Activated CD8-positive, alpha-beta T cell treated with anti-CD3 and anti-CD28 coated beads, Interleukin-2, amount 10 ng/mL, durations not matched to agents 7 days and 5 days (primary cell): ENCODE measurements at regions of chr14 and their contacts with region 1.

Region 1: GRCh38 chr14:74804219-74804826 is 41.2 kb downstream of the YLPM1 start:
- DNase-seq: peak; percentile 51
- ATAC-seq: peak; percentile 68
- H3K4me3 Mint-ChIP-seq: no peak overlapping the region
- H3K27ac Mint-ChIP-seq: no peak overlapping the region
- H3K4me1 Mint-ChIP-seq: no peaks in the 10 kb centered on the region
- H3K27me3 Mint-ChIP-seq: no peaks in the 10 kb centered on the region

Region 2: DNA sequence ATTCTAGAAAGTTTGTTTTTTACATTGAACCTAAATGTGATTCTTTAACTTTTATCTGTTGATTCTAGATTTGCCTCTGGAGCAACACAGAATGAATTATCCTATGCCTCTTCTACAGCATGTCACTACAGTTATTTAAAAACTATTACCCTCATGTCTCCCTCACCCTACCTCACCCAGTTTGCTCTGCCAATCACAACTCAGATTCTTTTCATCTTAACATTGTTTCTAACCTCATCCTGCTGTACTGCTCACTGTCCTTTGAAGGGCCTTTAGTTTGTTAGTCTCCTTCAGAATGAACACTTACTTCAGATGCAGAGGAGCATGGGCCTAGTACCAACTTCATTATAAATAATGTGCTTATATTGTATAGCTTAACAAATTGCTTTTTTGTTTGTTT is 19.7 kb before region 1 on chr14:
- CTCF ChIA-PET with region 1: interaction called, 10 read pairs
- POLR2A ChIA-PET with region 1: no interaction called
- DNase-seq: no peak
- ATAC-seq: peak; percentile 23
- H3K4me3 Mint-ChIP-seq: no peak overlapping the region
- H3K27ac Mint-ChIP-seq: peak overlapping the region; percentile 10
- H3K4me1 Mint-ChIP-seq: peaks cover 16% of the 10 kb centered on the region
- H3K27me3 Mint-ChIP-seq: no peaks in the 10 kb centered on the region

Region 3: GRCh38 chr14:74792249-74793039 is 11.9 kb before region 1 on chr14:
- CTCF ChIA-PET with region 1: interaction called, 10 read pairs
- POLR2A ChIA-PET with region 1: no interaction called
- DNase-seq: peak; percentile 41
- ATAC-seq: peak; percentile 70
- H3K4me3 Mint-ChIP-seq: peak overlapping the region; percentile 71
- H3K27ac Mint-ChIP-seq: peak overlapping the region; percentile 77
- H3K4me1 Mint-ChIP-seq: peaks cover 41% of the 10 kb centered on the region
- H3K27me3 Mint-ChIP-seq: no peaks in the 10 kb centered on the region

Region 4: DNA sequence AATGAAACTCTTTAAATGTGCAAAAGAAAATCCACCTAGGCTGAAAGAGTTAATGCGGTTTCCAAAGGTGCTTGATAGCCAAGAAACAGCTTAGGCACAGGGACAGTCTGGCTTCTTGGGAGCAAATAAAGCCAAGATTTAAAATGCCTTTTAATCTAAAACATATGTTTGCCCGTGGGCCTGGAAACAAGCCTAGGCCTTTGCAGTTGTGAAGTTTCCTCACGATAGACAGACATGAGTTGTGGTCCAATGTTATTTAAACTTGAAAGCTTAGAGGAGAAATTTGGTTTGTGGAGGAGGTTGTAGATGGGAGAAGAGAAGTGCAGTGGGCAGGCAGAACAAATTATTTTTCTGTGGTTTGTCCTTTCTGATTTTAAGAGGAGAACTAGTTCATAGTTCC is 41.8 kb after region 1 on chr14:
- CTCF ChIA-PET with region 1: no interaction called
- POLR2A ChIA-PET with region 1: no interaction called
- DNase-seq: no peak
- ATAC-seq: no peak
- H3K4me3 Mint-ChIP-seq: no peak overlapping the region
- H3K27ac Mint-ChIP-seq: no peak overlapping the region
- H3K4me1 Mint-ChIP-seq: peaks cover 18% of the 10 kb centered on the region
- H3K27me3 Mint-ChIP-seq: no peaks in the 10 kb centered on the region